ENCODE measurements at regions of chr7 and their contacts with region 1.

Region 1: GRCh38 chr7:100889761-100890634 is 483 bp upstream of the UFSP1 start:
- DNase-seq: peak; percentile 88
- H3K4me3 Mint-ChIP-seq: peak overlapping the region; percentile 79
- H3K27ac Mint-ChIP-seq: no peak overlapping the region
- H3K4me1 Mint-ChIP-seq: peaks cover 42% of the 10 kb centered on the region
- H3K27me3 Mint-ChIP-seq: peaks cover 30% of the 10 kb centered on the region

Region 2: GRCh38 chr7:100874577-100875355 is 15.2 kb before region 1 on chr7 and contains the start of gene SRRT:
- intact Hi-C with region 1: loop called (anchors 1 kb)
- DNase-seq: peak; percentile 98
- H3K4me3 Mint-ChIP-seq: peak within 1 kb of the TSS; percentile 96
- H3K27ac Mint-ChIP-seq: peak within 1 kb of the TSS; percentile 94
- H3K4me1 Mint-ChIP-seq: peaks cover 28% of the 10 kb centered on the region
- H3K27me3 Mint-ChIP-seq: no peaks in the 10 kb centered on the region
- total RNA-seq, gene SRRT: 280 and 290 TPM in 2 replicates

Region 3: DNA sequence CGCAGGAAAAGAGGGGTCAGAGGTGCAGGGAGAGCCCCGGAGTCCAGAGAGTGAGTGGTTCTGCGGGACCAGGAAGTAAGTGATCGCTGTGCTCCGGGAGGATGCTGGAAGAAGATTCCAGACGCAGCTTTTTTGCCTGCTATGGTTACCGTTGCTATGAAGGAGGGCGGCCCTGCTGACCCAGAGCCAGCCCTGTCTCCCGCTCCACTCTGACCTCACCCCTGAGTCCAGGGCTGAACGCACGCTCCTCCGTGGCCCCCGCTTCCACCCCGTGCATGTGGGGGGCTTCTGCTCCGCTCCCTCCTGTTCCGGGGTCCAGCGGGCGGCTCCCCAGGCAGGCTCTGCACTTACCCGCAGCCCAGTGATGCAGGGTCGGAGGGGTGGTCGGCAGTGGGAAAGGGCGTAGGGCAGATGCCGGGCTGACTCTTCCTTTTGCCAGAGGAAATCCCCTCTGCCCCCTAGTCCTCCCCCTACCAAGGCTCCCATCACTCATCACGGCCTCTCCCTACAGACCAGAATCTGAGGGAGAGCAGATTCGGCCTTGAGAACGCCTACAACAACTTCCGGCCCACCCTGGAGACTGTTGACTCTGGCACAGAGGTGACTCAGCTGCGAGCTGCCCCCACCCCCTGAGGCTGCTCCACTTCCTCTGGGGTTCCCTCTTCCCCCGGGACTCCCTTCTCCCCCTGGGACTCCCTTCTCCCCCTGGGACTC is 127.2 kb after region 1 on chr7:
- intact Hi-C with region 1: loop called (anchors 1 kb)
- DNase-seq: peak; percentile 67
- H3K4me3 Mint-ChIP-seq: peak overlapping the region; percentile 86
- H3K27ac Mint-ChIP-seq: peak overlapping the region; percentile 88
- H3K4me1 Mint-ChIP-seq: peaks cover 17% of the 10 kb centered on the region
- H3K27me3 Mint-ChIP-seq: peaks cover 7% of the 10 kb centered on the region

Measured in activated T-helper 2 cell treated with anti-CD3 and anti-CD28 coated beads, Interferon-gamma antibody, Interleukin-2, Interleukin-4, amounts not matched to agents 10 μg/mL and 5 μg/mL and 100 μg/mL, durations not matched to agents 14 hours and 24 hours and 36 hours (primary cell).